Activated CD8-positive, alpha-beta T cell treated with anti-CD3 and anti-CD28 coated beads for 36 hours (primary cell): ENCODE measurements at regions of chr3 and their contacts with region 1.

Region 1: GRCh38 chr3:129249276-129250065 is at the start of gene COPG1:
- DNase-seq: peak; percentile 89
- ATAC-seq: peak; percentile 86
- H3K4me3 Mint-ChIP-seq: peak within 1 kb of the TSS; percentile 95
- H3K27ac Mint-ChIP-seq: peak within 1 kb of the TSS; percentile 96
- H3K4me1 Mint-ChIP-seq: peaks cover 38% of the 10 kb centered on the region
- H3K27me3 Mint-ChIP-seq: no peaks in the 10 kb centered on the region
- CTCF ChIP-seq: no peak
- total RNA-seq, gene COPG1: 114 to 118 TPM

Region 2: GRCh38 chr3:129026728-129027543 is 222.5 kb before region 1 on chr3:
- CTCF ChIA-PET with region 1: interaction called, 22 read pairs
- POLR2A ChIA-PET with region 1: interaction called, 3 read pairs
- intact Hi-C with region 1: no loop called
- DNase-seq: peak; percentile 96
- ATAC-seq: peak; percentile 99
- H3K4me3 Mint-ChIP-seq: peak overlapping the region; percentile 73
- H3K27ac Mint-ChIP-seq: peak overlapping the region; percentile 91
- H3K4me1 Mint-ChIP-seq: peaks cover 22% of the 10 kb centered on the region
- H3K27me3 Mint-ChIP-seq: no peaks in the 10 kb centered on the region
- CTCF ChIP-seq: peak; percentile 94

Region 3: GRCh38 chr3:129068291-129068886 is 181.1 kb before region 1 on chr3:
- CTCF ChIA-PET with region 1: interaction called, 20 read pairs
- POLR2A ChIA-PET with region 1: interaction called, 3 read pairs
- intact Hi-C with region 1: no loop called
- DNase-seq: peak; percentile 26
- ATAC-seq: peak; percentile 52
- H3K4me3 Mint-ChIP-seq: peak overlapping the region; percentile 61
- H3K27ac Mint-ChIP-seq: no peak overlapping the region
- H3K4me1 Mint-ChIP-seq: peaks cover 11% of the 10 kb centered on the region
- H3K27me3 Mint-ChIP-seq: no peaks in the 10 kb centered on the region
- CTCF ChIP-seq: no peak

Region 4: GRCh38 chr3:129139911-129140310 is 109.6 kb before region 1 on chr3:
- CTCF ChIA-PET with region 1: interaction called, 11 read pairs
- POLR2A ChIA-PET with region 1: no interaction called
- intact Hi-C with region 1: no loop called
- DNase-seq: no peak
- ATAC-seq: no peak
- H3K4me3 Mint-ChIP-seq: no peak overlapping the region
- H3K27ac Mint-ChIP-seq: no peak overlapping the region
- H3K4me1 Mint-ChIP-seq: no peaks in the 10 kb centered on the region
- H3K27me3 Mint-ChIP-seq: no peaks in the 10 kb centered on the region
- CTCF ChIP-seq: no peak

Region 5: GRCh38 chr3:129183569-129184395 is 65.7 kb before region 1 on chr3 and contains the start of gene CNBP:
- CTCF ChIA-PET with region 1: interaction called, 22 read pairs
- POLR2A ChIA-PET with region 1: interaction called, 13 read pairs
- intact Hi-C with region 1: loop called (anchors 5 kb)
- DNase-seq: peak; percentile 94
- ATAC-seq: peak; percentile 94
- H3K4me3 Mint-ChIP-seq: peak within 1 kb of the TSS; percentile 97
- H3K27ac Mint-ChIP-seq: peak within 1 kb of the TSS; percentile 99
- H3K4me1 Mint-ChIP-seq: peaks cover 29% of the 10 kb centered on the region
- H3K27me3 Mint-ChIP-seq: no peaks in the 10 kb centered on the region
- CTCF ChIP-seq: no peak
- total RNA-seq, gene CNBP: 453 to 454 TPM

Region 6: GRCh38 chr3:129230311-129231019 is 19.0 kb before region 1 on chr3:
- CTCF ChIA-PET with region 1: interaction called, 32 read pairs
- POLR2A ChIA-PET with region 1: interaction called, 3 read pairs
- intact Hi-C with region 1: no loop called
- DNase-seq: peak; percentile 63
- ATAC-seq: peak; percentile 97
- H3K4me3 Mint-ChIP-seq: no peak overlapping the region
- H3K27ac Mint-ChIP-seq: peak overlapping the region; percentile 57
- H3K4me1 Mint-ChIP-seq: peaks cover 16% of the 10 kb centered on the region
- H3K27me3 Mint-ChIP-seq: peaks cover 3% of the 10 kb centered on the region
- CTCF ChIP-seq: no peak